CD8-positive, alpha-beta T cell (primary cell): ENCODE measurements at regions of chr13 and their contacts with region 1.

Region 1: DNA sequence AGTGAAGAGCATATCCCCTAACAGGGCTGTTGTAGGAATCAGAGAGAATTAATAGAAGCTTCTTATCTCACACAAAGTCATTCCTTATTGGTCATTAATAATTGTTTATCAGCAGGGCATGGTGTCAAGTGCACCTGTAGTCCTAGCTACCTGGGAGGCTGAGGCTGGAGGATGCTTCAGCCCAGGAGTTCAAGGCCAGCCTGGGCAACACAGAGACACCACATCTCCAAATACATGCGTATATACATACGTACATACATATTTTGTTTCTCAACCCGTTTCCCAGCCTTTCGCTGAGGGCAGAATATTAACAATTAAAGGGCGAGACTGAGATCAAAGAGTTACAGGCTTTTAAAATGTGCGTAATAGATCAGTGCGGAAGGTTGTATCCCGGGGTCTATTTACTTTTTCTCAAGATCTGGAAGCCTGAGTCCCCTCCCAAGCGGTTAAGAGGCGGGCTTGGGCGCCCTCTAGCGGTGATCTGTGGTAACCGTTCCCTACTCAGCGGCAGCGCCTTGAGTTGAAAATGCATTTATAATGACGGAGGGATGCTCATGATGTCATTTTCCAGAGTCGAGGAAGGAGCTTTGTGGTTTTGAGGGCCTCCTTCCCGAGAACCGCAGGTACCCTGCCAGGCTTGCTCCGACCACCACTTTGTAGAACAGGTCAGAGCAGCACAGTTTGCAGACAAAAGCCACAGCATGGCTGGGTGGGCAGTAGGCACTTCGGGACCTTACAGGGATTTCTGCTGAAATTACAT is 169.6 kb upstream of the GPR12 start:
- DNase-seq: peak; percentile 51 to 83 (median 64)
- ATAC-seq: peak; percentile 44
- H3K4me3 ChIP-seq: no peak overlapping the region
- H3K4me3 Mint-ChIP-seq: no peak overlapping the region
- H3K27ac ChIP-seq: no peak overlapping the region
- H3K27ac Mint-ChIP-seq: no peak overlapping the region
- H3K4me1 ChIP-seq: no peaks in the 10 kb centered on the region
- H3K4me1 Mint-ChIP-seq: peaks cover 3% of the 10 kb centered on the region
- H3K27me3 ChIP-seq: peaks cover 0 to 2% of the 10 kb centered on the region in 2 experiments
- H3K27me3 Mint-ChIP-seq: peaks cover 2% of the 10 kb centered on the region
- CTCF ChIP-seq: peak; percentile 96

Region 2: DNA sequence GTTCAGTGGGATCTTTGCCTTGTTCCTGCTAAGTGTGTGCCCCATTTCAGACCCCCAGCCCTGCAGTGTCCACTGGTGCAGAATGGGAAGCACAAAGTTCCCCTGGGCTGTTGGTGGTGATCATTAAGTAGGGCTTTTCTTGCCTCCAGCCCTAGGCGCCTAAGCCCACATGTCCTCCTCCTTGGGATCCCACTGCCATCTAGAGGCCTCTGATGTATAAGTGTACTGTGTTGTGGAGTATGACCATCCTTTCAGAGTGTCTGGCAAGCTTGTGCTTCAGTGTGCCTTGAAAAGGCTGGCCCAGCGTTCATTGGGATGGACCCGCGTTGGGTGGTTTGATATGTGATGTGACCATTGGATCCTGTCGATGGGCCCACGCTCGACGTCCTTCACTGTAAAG is 301.4 kb before region 1 on chr13:
- CTCF ChIA-PET with region 1: no interaction called
- POLR2A ChIA-PET with region 1: no interaction called
- intact Hi-C with region 1: no loop called
- DNase-seq: no peak
- ATAC-seq: no peak
- H3K4me3 ChIP-seq: no peak overlapping the region
- H3K4me3 Mint-ChIP-seq: no peak overlapping the region
- H3K27ac ChIP-seq: no peak overlapping the region
- H3K27ac Mint-ChIP-seq: no peak overlapping the region
- H3K4me1 ChIP-seq: no peaks in the 10 kb centered on the region
- H3K4me1 Mint-ChIP-seq: no peaks in the 10 kb centered on the region
- H3K27me3 ChIP-seq: no peaks in the 10 kb centered on the region
- H3K27me3 Mint-ChIP-seq: no peaks in the 10 kb centered on the region
- CTCF ChIP-seq: no peak

Region 3: DNA sequence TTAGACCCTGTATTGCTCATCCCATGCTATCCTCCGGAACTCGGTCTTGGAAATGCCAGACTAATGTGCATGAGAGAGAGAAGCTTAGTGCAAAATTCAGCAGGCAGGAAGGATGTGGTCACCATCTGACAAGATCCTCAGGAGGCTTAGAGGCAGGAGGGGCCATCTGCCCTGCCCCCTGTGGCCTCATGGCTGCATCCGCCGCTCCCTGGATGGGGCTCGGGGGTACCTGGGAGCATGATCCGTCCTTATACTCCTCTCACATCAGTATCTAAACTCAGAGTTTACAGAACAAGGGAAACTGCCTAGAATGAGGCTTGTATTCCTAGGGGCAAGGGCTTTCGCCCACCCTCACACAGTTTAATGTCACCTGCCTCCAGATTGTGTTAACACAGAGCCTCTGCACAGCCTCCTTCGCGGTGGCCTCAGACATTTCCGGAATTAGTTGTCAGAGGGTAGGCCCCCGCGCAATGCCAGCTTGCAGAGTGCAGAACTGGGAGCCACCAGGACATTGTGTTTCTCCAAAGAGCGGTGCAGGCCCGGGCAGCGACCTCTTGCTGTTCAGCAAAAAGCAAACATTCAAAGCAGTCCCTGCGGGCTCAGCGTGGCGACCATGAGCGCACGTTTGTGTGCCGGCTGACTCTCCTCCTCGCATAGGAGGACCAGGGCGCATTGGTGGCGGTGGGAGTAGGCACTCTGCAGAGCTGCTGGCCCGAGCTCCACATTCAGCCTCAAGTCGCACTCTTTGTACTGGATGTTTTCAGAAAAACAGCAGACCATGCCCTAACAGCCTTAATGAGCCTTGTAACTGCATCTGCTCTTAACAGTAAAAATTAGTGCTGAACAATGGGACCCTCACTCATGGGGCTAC is 208.7 kb before region 1 on chr13:
- CTCF ChIA-PET with region 1: interaction called, 7 read pairs
- POLR2A ChIA-PET with region 1: no interaction called
- intact Hi-C with region 1: loop called in 1 of 2 experiments (anchors 5 kb)
- DNase-seq: peak in 8 of 9 experiments; percentile 9 to 73 (median 36)
- ATAC-seq: peak; percentile 81
- H3K4me3 ChIP-seq: peak overlapping the region; percentile 39 to 57
- H3K4me3 Mint-ChIP-seq: peak overlapping the region; percentile 83
- H3K27ac ChIP-seq: peak overlapping the region; percentile 20 to 69
- H3K27ac Mint-ChIP-seq: peak overlapping the region; percentile 91
- H3K4me1 ChIP-seq: peaks cover 20% of the 10 kb centered on the region
- H3K4me1 Mint-ChIP-seq: peaks cover 24% of the 10 kb centered on the region
- H3K27me3 ChIP-seq: no peaks in the 10 kb centered on the region
- H3K27me3 Mint-ChIP-seq: no peaks in the 10 kb centered on the region
- CTCF ChIP-seq: no peak

Region 4: GRCh38 chr13:26914624-26915023 is 15.5 kb before region 1 on chr13:
- CTCF ChIA-PET with region 1: interaction called, 35 read pairs
- POLR2A ChIA-PET with region 1: no interaction called
- intact Hi-C with region 1: no loop called
- DNase-seq: peak in 2 of 9 experiments; percentile 14 to 43
- ATAC-seq: no peak
- H3K4me3 ChIP-seq: no peak overlapping the region
- H3K4me3 Mint-ChIP-seq: no peak overlapping the region
- H3K27ac ChIP-seq: no peak overlapping the region
- H3K27ac Mint-ChIP-seq: no peak overlapping the region
- H3K4me1 ChIP-seq: no peaks in the 10 kb centered on the region
- H3K4me1 Mint-ChIP-seq: peaks cover 8% of the 10 kb centered on the region
- H3K27me3 ChIP-seq: no peaks in the 10 kb centered on the region
- H3K27me3 Mint-ChIP-seq: peaks cover under 1% of the 10 kb centered on the region
- CTCF ChIP-seq: no peak